Activated T-helper 2 cell treated with anti-CD3 and anti-CD28 coated beads, Interferon-gamma antibody, Interleukin-2, Interleukin-4, amounts not matched to agents 10 μg/mL and 5 μg/mL and 100 μg/mL, durations not matched to agents 14 hours and 24 hours and 36 hours (primary cell): ENCODE measurements at regions of chr17 and their contacts with region 1.

Region 1: DNA sequence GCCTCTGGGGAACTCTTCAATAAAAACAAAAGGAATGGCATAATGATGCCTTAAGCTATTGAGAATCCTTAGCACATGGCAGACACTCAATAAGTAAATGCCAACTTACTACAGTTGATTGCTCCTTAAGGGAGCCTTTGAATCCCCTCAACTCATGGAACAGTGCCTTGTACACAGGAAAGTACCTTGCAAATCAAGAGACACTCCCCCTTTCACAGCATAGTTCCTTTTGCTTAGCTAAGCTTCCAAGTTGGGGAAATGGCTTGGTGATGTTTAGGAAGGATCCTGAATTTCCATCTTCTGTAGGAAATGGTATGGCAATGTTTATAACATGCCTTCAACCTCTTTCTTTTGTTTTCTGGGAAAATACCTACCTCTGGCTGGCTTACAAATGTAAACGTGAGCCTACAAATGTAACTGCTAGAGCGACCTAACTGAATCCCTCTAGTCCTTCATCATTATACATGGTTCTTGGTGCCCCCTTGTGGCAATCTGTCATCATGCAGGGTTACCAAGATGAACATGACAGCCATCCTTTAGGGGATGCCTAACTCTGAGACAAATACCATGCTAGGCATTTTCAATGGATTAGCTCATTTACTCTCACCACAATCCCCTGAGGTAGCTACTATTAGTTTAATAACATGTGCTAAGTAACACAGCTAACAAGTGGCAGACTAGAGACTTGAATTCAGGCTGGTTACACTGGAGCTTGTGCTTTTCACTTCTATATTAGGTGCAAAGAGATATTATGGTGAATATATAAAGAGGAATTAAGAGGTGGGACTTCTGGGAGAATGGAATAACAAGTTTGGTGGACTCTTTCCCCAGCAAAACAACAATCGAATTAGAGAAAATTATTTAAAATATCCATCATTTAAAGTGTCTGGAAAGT is 65.0 kb downstream of the MMD start:
- DNase-seq: peak; percentile 65
- H3K4me3 Mint-ChIP-seq: no peak overlapping the region
- H3K27ac Mint-ChIP-seq: no peak overlapping the region
- H3K4me1 Mint-ChIP-seq: peaks cover 6% of the 10 kb centered on the region
- H3K27me3 Mint-ChIP-seq: peaks cover 29% of the 10 kb centered on the region

Region 2: DNA sequence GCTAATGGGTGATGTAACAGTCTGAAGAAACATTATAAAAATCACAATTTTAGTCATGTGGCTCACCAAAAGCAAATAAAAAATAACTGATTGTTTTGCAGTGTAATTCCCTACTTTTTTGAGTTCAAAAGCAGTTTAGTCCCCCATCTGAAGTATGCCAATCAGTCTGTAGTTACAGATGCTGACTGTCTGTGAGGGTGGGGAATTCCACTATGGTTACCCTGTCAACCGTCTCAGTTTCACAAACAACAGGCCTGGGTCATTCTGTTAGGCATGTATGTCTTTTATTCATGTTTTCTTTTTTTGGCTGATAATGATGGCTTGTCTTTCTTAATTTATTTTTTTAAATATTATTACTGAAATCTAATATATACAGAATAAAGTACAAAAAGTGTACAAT is 318.9 kb before region 1 on chr17:
- intact Hi-C with region 1: loop called (anchors 10 kb)
- DNase-seq: no peak
- H3K4me3 Mint-ChIP-seq: no peak overlapping the region
- H3K27ac Mint-ChIP-seq: no peak overlapping the region
- H3K4me1 Mint-ChIP-seq: peaks cover 24% of the 10 kb centered on the region
- H3K27me3 Mint-ChIP-seq: no peaks in the 10 kb centered on the region

Region 3: GRCh38 chr17:55540414-55541091 is 183.9 kb after region 1 on chr17:
- intact Hi-C with region 1: no loop called
- DNase-seq: no peak
- H3K4me3 Mint-ChIP-seq: no peak overlapping the region
- H3K27ac Mint-ChIP-seq: no peak overlapping the region
- H3K4me1 Mint-ChIP-seq: no peaks in the 10 kb centered on the region
- H3K27me3 Mint-ChIP-seq: peaks cover 13% of the 10 kb centered on the region